B cell (primary cell): ENCODE measurements at regions of chr1 and their contacts with region 1.

Region 1: GRCh38 chr1:108877348-108878159 is 769 bp downstream of the GPSM2 start:
- DNase-seq: peak; percentile 34
- ATAC-seq: no peak
- H3K4me3 ChIP-seq: peak overlapping the region; percentile 68 to 93 (median 86)
- H3K4me3 Mint-ChIP-seq: peak overlapping the region; percentile 98
- H3K27ac ChIP-seq: peak overlapping the region in 1 of 2 donors; percentile 67
- H3K27ac Mint-ChIP-seq: peak overlapping the region; percentile 88
- H3K4me1 ChIP-seq: peaks cover 11 to 12% of the 10 kb centered on the region in 2 donors
- H3K4me1 Mint-ChIP-seq: peaks cover 13% of the 10 kb centered on the region
- H3K27me3 ChIP-seq: no peaks in the 10 kb centered on the region
- H3K27me3 Mint-ChIP-seq: no peaks in the 10 kb centered on the region
- CTCF ChIP-seq: no peak

Region 2: GRCh38 chr1:108661030-108661620 is 216.4 kb before region 1 on chr1 and contains the start of gene HENMT1:
- CTCF ChIA-PET with region 1: interaction called, 5 read pairs
- POLR2A ChIA-PET with region 1: no interaction called
- intact Hi-C with region 1: loop called (anchors 2 kb)
- DNase-seq: peak; percentile 94
- ATAC-seq: peak; percentile 84
- H3K4me3 ChIP-seq: peak within 1 kb of the TSS; percentile 2 to 69 (median 59)
- H3K4me3 Mint-ChIP-seq: peak within 1 kb of the TSS; percentile 88
- H3K27ac ChIP-seq: peak within 1 kb of the TSS; percentile 94 to 95
- H3K27ac Mint-ChIP-seq: peak within 1 kb of the TSS; percentile 96
- H3K4me1 ChIP-seq: peaks cover 8 to 10% of the 10 kb centered on the region in 2 donors
- H3K4me1 Mint-ChIP-seq: peaks cover 12% of the 10 kb centered on the region
- H3K27me3 ChIP-seq: no peaks in the 10 kb centered on the region
- H3K27me3 Mint-ChIP-seq: no peaks in the 10 kb centered on the region
- CTCF ChIP-seq: no peak
- total RNA-seq, gene HENMT1: 6.2 and 6.4 TPM in 2 replicates

Region 3: DNA sequence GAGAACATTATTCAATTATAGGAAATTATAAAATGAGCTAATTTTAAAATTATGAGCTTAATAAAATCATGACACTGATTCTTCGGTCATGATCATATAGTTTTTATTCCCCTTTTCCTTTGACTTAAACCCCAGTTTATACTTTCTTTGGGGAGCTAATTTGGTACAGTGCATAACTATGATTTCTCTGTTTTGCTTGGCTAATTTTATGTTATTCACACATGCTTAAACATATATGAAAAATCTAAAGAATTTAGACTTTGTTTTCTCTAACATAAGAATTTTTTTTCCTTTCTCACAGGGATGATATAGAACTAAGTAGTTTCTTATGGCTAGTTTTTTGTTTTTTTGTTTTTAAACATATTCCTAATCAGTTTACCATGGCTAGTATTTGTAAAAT is 78.6 kb before region 1 on chr1:
- CTCF ChIA-PET with region 1: no interaction called
- POLR2A ChIA-PET with region 1: no interaction called
- intact Hi-C with region 1: no loop called
- DNase-seq: no peak
- ATAC-seq: no peak
- H3K4me3 ChIP-seq: no peak overlapping the region
- H3K4me3 Mint-ChIP-seq: no peak overlapping the region
- H3K27ac ChIP-seq: no peak overlapping the region
- H3K27ac Mint-ChIP-seq: no peak overlapping the region
- H3K4me1 ChIP-seq: no peaks in the 10 kb centered on the region
- H3K4me1 Mint-ChIP-seq: no peaks in the 10 kb centered on the region
- H3K27me3 ChIP-seq: no peaks in the 10 kb centered on the region
- H3K27me3 Mint-ChIP-seq: no peaks in the 10 kb centered on the region
- CTCF ChIP-seq: no peak

Region 4: GRCh38 chr1:108897865-108898720 is 20.5 kb after region 1 on chr1:
- CTCF ChIA-PET with region 1: interaction called, 10 read pairs
- POLR2A ChIA-PET with region 1: no interaction called
- intact Hi-C with region 1: no loop called
- DNase-seq: peak; percentile 66
- ATAC-seq: peak; percentile 62
- H3K4me3 ChIP-seq: no peak overlapping the region
- H3K4me3 Mint-ChIP-seq: no peak overlapping the region
- H3K27ac ChIP-seq: no peak overlapping the region
- H3K27ac Mint-ChIP-seq: no peak overlapping the region
- H3K4me1 ChIP-seq: no peaks in the 10 kb centered on the region
- H3K4me1 Mint-ChIP-seq: no peaks in the 10 kb centered on the region
- H3K27me3 ChIP-seq: no peaks in the 10 kb centered on the region
- H3K27me3 Mint-ChIP-seq: no peaks in the 10 kb centered on the region
- CTCF ChIP-seq: peak; percentile 77

Region 5: GRCh38 chr1:108963052-108963686 is 85.6 kb after region 1 on chr1 and contains the start of gene CLCC1:
- CTCF ChIA-PET with region 1: no interaction called
- POLR2A ChIA-PET with region 1: no interaction called
- intact Hi-C with region 1: loop called (anchors 1 kb)
- DNase-seq: peak; percentile 97
- ATAC-seq: peak; percentile 91
- H3K4me3 ChIP-seq: peak within 1 kb of the TSS; percentile 56 to 94 (median 76)
- H3K4me3 Mint-ChIP-seq: peak within 1 kb of the TSS; percentile 91
- H3K27ac ChIP-seq: peak within 1 kb of the TSS; percentile 86 to 94
- H3K27ac Mint-ChIP-seq: peak within 1 kb of the TSS; percentile 95
- H3K4me1 ChIP-seq: peaks cover 16 to 17% of the 10 kb centered on the region in 2 donors
- H3K4me1 Mint-ChIP-seq: peaks cover 30% of the 10 kb centered on the region
- H3K27me3 ChIP-seq: no peaks in the 10 kb centered on the region
- H3K27me3 Mint-ChIP-seq: no peaks in the 10 kb centered on the region
- CTCF ChIP-seq: no peak
- total RNA-seq, gene CLCC1: 26.9 and 29.5 TPM in 2 replicates

Region 6: GRCh38 chr1:109090196-109091077 is 212.9 kb after region 1 on chr1 and contains the start of gene TMEM167B:
- CTCF ChIA-PET with region 1: no interaction called
- POLR2A ChIA-PET with region 1: no interaction called
- intact Hi-C with region 1: loop called (anchors 5 kb)
- DNase-seq: peak; percentile 93
- ATAC-seq: peak; percentile 89
- H3K4me3 ChIP-seq: peak within 1 kb of the TSS; percentile 88 to 99 (median 93)
- H3K4me3 Mint-ChIP-seq: peak within 1 kb of the TSS; percentile 92
- H3K27ac ChIP-seq: peak within 1 kb of the TSS; percentile 96 to 98
- H3K27ac Mint-ChIP-seq: peak within 1 kb of the TSS; percentile 94
- H3K4me1 ChIP-seq: peaks cover 25 to 28% of the 10 kb centered on the region in 2 donors
- H3K4me1 Mint-ChIP-seq: peaks cover 33% of the 10 kb centered on the region
- H3K27me3 ChIP-seq: no peaks in the 10 kb centered on the region
- H3K27me3 Mint-ChIP-seq: no peaks in the 10 kb centered on the region
- CTCF ChIP-seq: no peak
- total RNA-seq, gene TMEM167B: 40.9 and 44.5 TPM in 2 replicates

Region 7: DNA sequence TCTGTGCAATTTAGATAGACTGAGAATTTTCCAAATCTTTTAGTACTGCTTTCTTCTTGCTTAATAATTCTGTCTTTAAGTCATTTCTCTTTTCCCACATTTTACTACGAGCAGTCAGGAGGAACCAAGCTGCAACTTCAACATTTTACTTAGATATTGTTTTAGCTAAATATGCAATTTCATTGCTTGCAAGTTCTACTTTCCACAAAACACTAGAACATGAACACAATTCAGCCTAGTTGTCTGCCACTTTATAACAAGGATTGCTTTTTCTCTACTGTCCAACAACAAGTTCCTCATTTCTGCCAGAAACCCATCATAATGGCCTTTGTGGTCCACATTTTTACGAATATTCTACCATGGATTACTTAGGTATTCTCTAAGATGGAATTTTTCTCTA is 483.5 kb after region 1 on chr1:
- CTCF ChIA-PET with region 1: no interaction called
- POLR2A ChIA-PET with region 1: interaction called, 10 read pairs
- intact Hi-C with region 1: no loop called
- DNase-seq: no peak
- ATAC-seq: no peak
- H3K4me3 ChIP-seq: no peak overlapping the region
- H3K4me3 Mint-ChIP-seq: no peak overlapping the region
- H3K27ac ChIP-seq: no peak overlapping the region
- H3K27ac Mint-ChIP-seq: no peak overlapping the region
- H3K4me1 ChIP-seq: no peaks in the 10 kb centered on the region
- H3K4me1 Mint-ChIP-seq: no peaks in the 10 kb centered on the region
- H3K27me3 ChIP-seq: peaks cover 0 to 2% (median 0%) of the 10 kb centered on the region in 4 experiments
- H3K27me3 Mint-ChIP-seq: peaks cover 40% of the 10 kb centered on the region
- CTCF ChIP-seq: no peak